Heart right ventricle (tissue), 16 donors: ENCODE measurements at regions of chr1 and their contacts with region 1.

Region 1: DNA sequence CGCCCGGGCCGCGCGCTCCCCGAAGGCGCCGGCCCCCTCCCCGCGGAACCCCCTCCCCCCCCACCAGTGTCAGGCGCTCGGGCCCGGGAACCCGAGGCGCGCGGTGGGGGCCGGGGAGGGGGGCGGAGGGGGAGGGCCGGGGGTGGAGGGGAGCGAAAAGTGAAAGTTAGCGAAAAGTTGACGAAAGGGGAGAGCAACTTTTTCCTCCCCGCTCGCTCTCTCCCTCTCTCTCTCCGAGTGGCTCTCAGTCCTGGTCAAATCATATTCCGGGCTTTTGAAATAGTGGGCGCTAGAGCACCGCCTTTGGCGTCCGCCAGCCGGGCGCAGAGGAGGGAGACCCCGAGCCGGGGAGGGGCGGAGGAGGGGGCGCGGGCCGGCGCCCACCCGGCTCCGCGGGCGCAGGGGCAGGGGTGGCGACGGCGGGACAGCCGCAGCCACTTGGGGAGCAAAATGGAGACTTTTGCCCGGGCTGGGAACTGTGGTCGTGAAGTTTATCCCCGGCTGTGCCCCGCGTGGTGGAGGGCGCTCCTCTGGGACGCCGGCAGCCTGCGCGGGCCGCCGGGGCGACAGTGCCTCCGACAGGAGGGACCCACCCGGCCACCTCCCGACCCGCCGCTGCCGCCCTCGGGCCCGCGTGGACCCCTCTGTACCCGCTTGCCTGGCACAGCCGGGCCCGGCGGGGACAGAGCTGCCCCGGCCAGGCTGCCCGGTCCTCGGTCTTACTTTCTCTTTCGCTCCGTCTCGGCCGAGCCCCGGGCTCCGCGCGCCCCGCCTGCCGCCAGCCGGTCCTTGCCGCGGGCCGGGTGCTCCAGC is 694 bp downstream of the PRDM16 start:
- DNase-seq: peak in 1 of 2 donors; percentile 68
- ATAC-seq: peak in 7 of 8 donors; percentile 35 to 61 (median 42)
- H3K4me3 ChIP-seq: peak overlapping the region; percentile 70 to 92 (median 80)
- H3K27ac ChIP-seq: peak overlapping the region; percentile 76 to 97 (median 92)
- H3K4me1 ChIP-seq: peaks cover 2 to 81% (median 36%) of the 10 kb centered on the region in 9 donors
- H3K27me3 ChIP-seq: peaks cover 17 to 94% (median 79%) of the 10 kb centered on the region in 7 donors
- CTCF ChIP-seq: peak in 8 of 9 donors; percentile 27 to 70 (median 51)

Region 2: GRCh38 chr1:1989102-1989542 is 1080.6 kb before region 1 on chr1:
- intact Hi-C with region 1: no loop called
- DNase-seq: peak; percentile 47 to 63
- ATAC-seq: peak in 7 of 8 donors; percentile 40 to 85 (median 61)
- H3K4me3 ChIP-seq: no peak overlapping the region
- H3K27ac ChIP-seq: peak overlapping the region in 9 of 10 donors; percentile 24 to 87 (median 72)
- H3K4me1 ChIP-seq: peaks cover 0 to 25% (median 12%) of the 10 kb centered on the region in 9 donors
- H3K27me3 ChIP-seq: peaks cover 0 to 36% (median 23%) of the 10 kb centered on the region in 7 donors
- CTCF ChIP-seq: no peak

Region 3: GRCh38 chr1:3170561-3171453 is 101.1 kb after region 1 on chr1:
- intact Hi-C with region 1: loop called in 3 of 10 experiments (anchors 5 to 10 kb)
- DNase-seq: peak; percentile 83 to 87
- ATAC-seq: peak; percentile 82 to 93 (median 90)
- H3K4me3 ChIP-seq: peak overlapping the region in 9 of 10 donors; percentile 12 to 53 (median 45)
- H3K27ac ChIP-seq: peak overlapping the region; percentile 74 to 98 (median 90)
- H3K4me1 ChIP-seq: peaks cover 39 to 74% (median 60%) of the 10 kb centered on the region in 9 donors
- H3K27me3 ChIP-seq: peaks cover 0 to 18% (median 0%) of the 10 kb centered on the region in 7 donors
- CTCF ChIP-seq: no peak

Region 4: DNA sequence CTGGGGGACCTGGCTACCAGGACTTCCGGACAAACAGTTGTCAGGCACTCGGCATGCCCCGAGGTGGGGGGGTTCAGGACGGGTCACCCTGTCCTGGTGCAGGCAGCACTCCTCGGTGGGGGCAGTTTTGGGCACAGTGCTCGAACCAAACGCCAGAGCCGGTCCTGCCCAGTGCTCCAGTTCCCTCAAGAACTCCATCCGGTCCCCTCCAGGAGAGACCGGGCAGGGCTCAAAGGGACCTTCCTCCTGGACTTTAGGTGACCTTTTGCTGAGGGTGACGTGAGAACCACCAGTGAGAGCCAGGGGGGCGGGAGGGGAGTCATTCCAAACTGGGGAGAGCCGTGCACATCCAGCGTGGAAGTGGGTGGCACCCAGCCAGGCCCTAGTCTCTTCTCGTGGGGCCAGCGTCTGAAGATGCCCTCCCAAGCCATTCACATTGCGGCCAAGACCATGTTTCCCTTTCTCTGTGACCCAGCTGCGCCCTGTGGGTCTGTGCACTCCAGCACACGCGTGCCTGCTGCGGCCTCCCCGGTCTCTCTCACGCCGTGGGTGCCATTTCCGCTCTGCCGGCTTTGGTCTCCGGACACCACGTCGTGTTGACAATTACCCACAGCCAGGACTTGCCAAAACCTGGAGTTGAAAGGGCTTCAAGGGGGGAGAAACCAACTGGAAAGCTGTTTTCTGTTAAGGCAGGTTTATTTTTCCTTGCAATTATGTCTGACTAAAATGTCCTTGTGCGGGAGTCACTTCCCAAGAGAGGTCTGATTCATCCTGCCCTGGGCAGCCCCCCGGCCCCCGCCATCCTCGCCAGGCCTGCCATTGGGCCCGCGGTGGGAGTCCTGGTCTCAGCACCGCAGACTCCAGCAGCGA is 206.0 kb after region 1 on chr1:
- intact Hi-C with region 1: loop called in 5 of 10 experiments (anchors 5 to 10 kb)
- DNase-seq: peak; percentile 25 to 45
- ATAC-seq: peak; percentile 37 to 71 (median 66)
- H3K4me3 ChIP-seq: no peak overlapping the region
- H3K27ac ChIP-seq: peak overlapping the region in 7 of 10 donors; percentile 0 to 58 (median 20)
- H3K4me1 ChIP-seq: peaks cover 4 to 34% (median 14%) of the 10 kb centered on the region in 9 donors
- H3K27me3 ChIP-seq: peaks cover 0 to 5% (median 0%) of the 10 kb centered on the region in 7 donors
- CTCF ChIP-seq: no peak

Region 5: DNA sequence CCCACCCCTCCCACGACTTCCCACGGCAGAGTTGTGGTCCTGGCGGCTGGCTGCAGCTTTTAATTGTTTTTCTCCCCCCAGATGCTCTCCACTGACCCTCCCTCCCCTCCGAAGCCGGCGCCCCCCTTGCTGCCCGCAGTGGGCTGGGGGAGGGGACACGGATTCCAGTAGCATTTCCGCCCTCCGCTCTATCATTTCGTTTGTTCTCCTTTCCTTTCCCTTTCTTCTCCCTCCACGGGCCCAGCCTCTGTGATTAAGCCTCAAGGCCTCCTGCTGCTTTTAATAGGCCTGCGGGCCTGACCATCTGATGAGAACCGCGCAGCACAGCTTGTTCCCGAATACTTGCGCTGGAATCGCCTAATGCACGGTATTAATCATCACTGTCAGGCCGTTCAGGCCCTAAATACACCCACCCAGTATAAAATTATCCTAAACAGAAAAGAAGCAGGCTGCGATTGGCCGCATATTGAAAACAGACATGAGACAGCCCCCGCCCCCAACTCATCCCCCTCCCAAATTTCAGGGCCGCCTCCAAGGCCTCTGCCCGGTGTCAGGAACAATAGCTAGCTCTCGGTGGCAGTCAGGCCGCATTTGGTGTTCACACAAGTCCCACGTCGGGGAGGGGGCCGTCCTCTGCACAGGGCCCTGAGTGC is 282.7 kb after region 1 on chr1:
- intact Hi-C with region 1: loop called in 4 of 10 experiments (anchors 2 to 5 kb)
- DNase-seq: no peak
- ATAC-seq: peak in 4 of 8 donors; percentile 6 to 40 (median 18)
- H3K4me3 ChIP-seq: peak overlapping the region in 1 of 10 donors; percentile 5
- H3K27ac ChIP-seq: peak overlapping the region; percentile 69 to 98 (median 88)
- H3K4me1 ChIP-seq: peaks cover 25 to 96% (median 59%) of the 10 kb centered on the region in 9 donors
- H3K27me3 ChIP-seq: peaks cover 0 to 56% (median 14%) of the 10 kb centered on the region in 7 donors
- CTCF ChIP-seq: no peak

Region 6: GRCh38 chr1:3403388-3404231 is 333.9 kb after region 1 on chr1:
- intact Hi-C with region 1: loop called in 4 of 10 experiments (anchors 2 to 10 kb)
- DNase-seq: no peak
- ATAC-seq: no peak
- H3K4me3 ChIP-seq: no peak overlapping the region
- H3K27ac ChIP-seq: no peak overlapping the region
- H3K4me1 ChIP-seq: peaks cover 0 to 36% (median 13%) of the 10 kb centered on the region in 9 donors
- H3K27me3 ChIP-seq: no peaks in the 10 kb centered on the region
- CTCF ChIP-seq: peak in 4 of 9 donors; percentile 14 to 37 (median 15)

Region 7: DNA sequence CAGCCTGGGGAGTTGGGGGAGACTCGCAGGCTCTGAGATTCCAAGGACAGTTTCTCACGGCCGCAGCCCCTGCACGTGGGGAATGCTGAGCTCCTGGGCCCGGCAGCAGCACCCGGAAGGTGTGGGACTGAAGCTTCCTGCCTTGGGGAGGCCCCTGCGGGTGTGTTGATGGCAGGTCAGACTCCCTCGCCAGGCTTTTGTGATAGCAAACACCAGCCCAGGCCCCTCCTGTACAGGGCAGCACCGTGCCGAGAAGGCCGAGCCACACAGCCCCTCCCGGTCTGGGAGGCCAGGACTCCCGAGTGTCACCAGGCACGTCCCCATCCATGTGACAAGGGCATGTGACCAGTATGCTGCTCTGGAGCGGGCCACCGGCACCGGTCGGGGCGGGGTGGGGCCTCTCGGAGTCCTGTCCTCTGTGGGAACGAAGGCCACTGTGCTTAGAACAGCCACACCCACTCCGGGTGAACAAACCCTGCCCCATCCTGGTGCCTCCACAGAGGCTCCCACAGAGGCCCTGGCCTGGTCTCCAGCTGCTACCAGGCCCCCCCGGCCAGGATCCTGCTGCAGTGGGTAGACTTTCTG is 353.6 kb after region 1 on chr1:
- intact Hi-C with region 1: loop called in 8 of 10 experiments (anchors 1 to 10 kb)
- DNase-seq: peak; percentile 87 to 88
- ATAC-seq: peak; percentile 87 to 94 (median 92)
- H3K4me3 ChIP-seq: peak overlapping the region in 1 of 10 donors; percentile 18
- H3K27ac ChIP-seq: peak overlapping the region; percentile 64 to 94 (median 84)
- H3K4me1 ChIP-seq: peaks cover 11 to 42% (median 37%) of the 10 kb centered on the region in 9 donors
- H3K27me3 ChIP-seq: peaks cover 0 to 5% (median 0%) of the 10 kb centered on the region in 7 donors
- CTCF ChIP-seq: no peak

Region 8: GRCh38 chr1:3746830-3747521 is 677.3 kb after region 1 on chr1:
- intact Hi-C with region 1: no loop called
- DNase-seq: peak; percentile 89 to 93
- ATAC-seq: peak; percentile 92 to 98 (median 96)
- H3K4me3 ChIP-seq: peak overlapping the region; percentile 66 to 93 (median 82)
- H3K27ac ChIP-seq: peak overlapping the region in 9 of 10 donors; percentile 77 to 92 (median 87)
- H3K4me1 ChIP-seq: peaks cover 3 to 38% (median 23%) of the 10 kb centered on the region in 9 donors
- H3K27me3 ChIP-seq: peaks cover 0 to 6% (median 0%) of the 10 kb centered on the region in 7 donors
- CTCF ChIP-seq: no peak